Right cardiac atrium (tissue), 5 donors: ENCODE measurements at regions of chr5 and their contacts with region 1.

Region 1: GRCh38 chr5:155471027-155471426 is 457.5 kb downstream of the KIF4B start:
- DNase-seq: no peak
- ATAC-seq: no peak
- H3K4me3 ChIP-seq: no peak overlapping the region
- H3K27ac ChIP-seq: no peak overlapping the region
- H3K4me1 ChIP-seq: no peaks in the 10 kb centered on the region
- H3K27me3 ChIP-seq: no peaks in the 10 kb centered on the region

Region 2: GRCh38 chr5:155189981-155190380 is 281.0 kb before region 1 on chr5:
- intact Hi-C with region 1: loop called in 1 of 4 experiments (anchors 10 kb)
- DNase-seq: no peak
- ATAC-seq: no peak
- H3K4me3 ChIP-seq: no peak overlapping the region
- H3K27ac ChIP-seq: no peak overlapping the region
- H3K4me1 ChIP-seq: no peaks in the 10 kb centered on the region
- H3K27me3 ChIP-seq: no peaks in the 10 kb centered on the region